Heart right ventricle (tissue), 16 donors: ENCODE measurements at regions of chr6 and their contacts with region 1.

Region 1: GRCh38 chr6:168884646-168885086 is 369.0 kb downstream of the THBS2 start:
- DNase-seq: peak; percentile 54 to 80
- ATAC-seq: peak; percentile 82 to 88 (median 86)
- H3K4me3 ChIP-seq: peak overlapping the region in 8 of 10 donors; percentile 4 to 49 (median 42)
- H3K27ac ChIP-seq: peak overlapping the region in 1 of 10 donors; percentile 41
- H3K4me1 ChIP-seq: peaks cover 0 to 5% (median 0%) of the 10 kb centered on the region in 9 donors
- H3K27me3 ChIP-seq: peaks cover 0 to 26% (median 8%) of the 10 kb centered on the region in 7 donors
- CTCF ChIP-seq: peak; percentile 89 to 97 (median 95)

Region 2: GRCh38 chr6:168150551-168151320 is 733.9 kb before region 1 on chr6:
- intact Hi-C with region 1: loop called in 5 of 10 experiments (anchors 10 kb)
- DNase-seq: no peak
- ATAC-seq: peak in 5 of 8 donors; percentile 22 to 35 (median 33)
- H3K4me3 ChIP-seq: no peak overlapping the region
- H3K27ac ChIP-seq: no peak overlapping the region
- H3K4me1 ChIP-seq: peaks cover 0 to 4% (median 0%) of the 10 kb centered on the region in 9 donors
- H3K27me3 ChIP-seq: peaks cover 0 to 50% (median 32%) of the 10 kb centered on the region in 7 donors
- CTCF ChIP-seq: peak in 8 of 9 donors; percentile 29 to 62 (median 44)

Region 3: GRCh38 chr6:168157272-168158007 is 727.2 kb before region 1 on chr6:
- intact Hi-C with region 1: loop called in 4 of 10 experiments (anchors 10 kb)
- DNase-seq: no peak
- ATAC-seq: peak in 4 of 8 donors; percentile 35 to 56 (median 42)
- H3K4me3 ChIP-seq: no peak overlapping the region
- H3K27ac ChIP-seq: no peak overlapping the region
- H3K4me1 ChIP-seq: no peaks in the 10 kb centered on the region
- H3K27me3 ChIP-seq: peaks cover 0 to 54% (median 29%) of the 10 kb centered on the region in 7 donors
- CTCF ChIP-seq: no peak

Region 4: DNA sequence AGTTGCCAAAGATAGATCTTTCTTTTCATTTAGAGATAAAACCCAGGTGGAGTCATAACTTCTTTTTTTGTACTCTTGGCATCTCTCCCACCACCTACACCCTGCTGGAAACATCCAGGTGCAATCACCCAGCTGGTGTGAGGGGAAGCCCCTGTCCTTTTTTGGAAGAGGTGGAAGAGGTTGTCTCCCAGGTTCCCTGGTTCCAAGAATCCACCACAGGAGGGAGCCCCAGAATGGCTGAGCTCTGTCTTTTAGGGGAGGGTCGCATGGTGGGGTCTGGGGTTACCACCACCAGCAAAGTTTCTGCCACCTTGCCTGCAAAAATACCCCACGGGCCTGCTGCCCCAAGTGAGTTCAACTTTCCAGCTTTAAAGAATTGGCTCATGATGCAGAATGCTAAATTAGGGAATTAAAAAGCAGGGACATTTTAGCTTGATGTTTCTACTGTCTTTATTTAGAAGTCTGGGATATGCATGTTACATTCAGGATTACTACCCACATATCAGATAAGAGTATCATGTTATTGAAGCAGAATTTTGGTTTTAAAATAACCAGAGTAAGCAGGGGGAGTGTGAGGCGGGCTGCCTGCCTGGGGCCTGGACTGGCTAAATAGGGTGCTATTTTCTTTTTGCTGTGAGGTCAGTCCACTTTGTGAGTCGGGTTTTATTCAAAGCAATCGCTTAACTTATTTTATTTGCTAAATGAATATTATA is 432.7 kb before region 1 on chr6:
- intact Hi-C with region 1: loop called in 1 of 10 experiments (anchors 10 kb)
- DNase-seq: no peak
- ATAC-seq: peak in 4 of 8 donors; percentile 27 to 49 (median 40)
- H3K4me3 ChIP-seq: no peak overlapping the region
- H3K27ac ChIP-seq: peak overlapping the region in 4 of 10 donors; percentile 8 to 39 (median 22)
- H3K4me1 ChIP-seq: peaks cover 0 to 48% (median 10%) of the 10 kb centered on the region in 9 donors
- H3K27me3 ChIP-seq: peaks cover 0 to 47% (median 10%) of the 10 kb centered on the region in 7 donors
- CTCF ChIP-seq: peak in 8 of 9 donors; percentile 23 to 50 (median 32)

Region 5: DNA sequence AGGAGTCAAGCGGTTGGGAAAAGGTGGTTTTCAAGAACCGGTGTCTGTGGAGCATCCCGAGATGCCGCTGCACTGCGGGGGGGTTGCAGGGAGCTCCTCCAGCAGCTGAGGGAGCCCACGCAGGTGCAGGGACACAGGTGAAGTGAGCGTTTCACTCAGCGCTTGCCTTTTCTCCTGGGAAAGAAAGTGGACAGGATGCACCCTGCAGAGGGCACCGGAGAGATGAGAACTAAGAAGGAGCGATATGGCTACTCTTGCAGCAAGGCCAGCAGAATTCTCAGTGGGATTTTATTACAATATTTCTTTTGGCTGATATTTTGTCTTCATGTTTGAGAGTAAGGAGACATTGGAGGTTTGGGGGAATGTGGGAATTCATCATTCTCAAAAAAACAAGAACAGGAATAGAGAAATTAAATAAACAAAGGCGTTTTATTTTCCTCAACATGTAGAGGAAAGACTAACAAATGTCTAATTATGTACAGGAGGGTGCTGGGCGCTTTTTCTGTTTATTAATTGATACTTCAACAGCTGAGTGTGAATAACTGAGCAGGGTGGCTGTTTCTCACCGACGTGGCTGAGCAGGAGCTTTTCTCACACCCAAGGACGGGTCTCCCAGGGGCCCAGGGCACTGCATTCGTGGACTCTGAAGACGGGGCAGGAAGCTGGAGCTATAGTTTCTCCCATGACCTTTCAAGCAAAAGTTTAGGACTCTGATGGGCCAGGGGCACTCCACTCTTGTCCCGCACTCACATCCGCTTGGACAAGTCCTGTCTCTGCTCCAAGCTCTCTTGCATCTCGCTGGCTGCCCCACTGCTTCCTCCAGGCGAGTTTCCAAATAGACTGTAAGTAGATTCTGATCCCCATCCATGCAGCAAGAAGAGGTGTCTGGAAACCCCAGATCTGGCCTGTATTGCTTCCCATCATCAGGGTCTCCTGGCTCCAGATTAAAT is 267.6 kb before region 1 on chr6:
- intact Hi-C with region 1: loop called in 8 of 10 experiments (anchors 1 to 10 kb)
- DNase-seq: peak in 1 of 2 donors; percentile 39
- ATAC-seq: peak; percentile 53 to 91 (median 74)
- H3K4me3 ChIP-seq: no peak overlapping the region
- H3K27ac ChIP-seq: peak overlapping the region in 6 of 10 donors; percentile 15 to 50 (median 40)
- H3K4me1 ChIP-seq: peaks cover 0 to 17% (median 0%) of the 10 kb centered on the region in 9 donors
- H3K27me3 ChIP-seq: no peaks in the 10 kb centered on the region
- CTCF ChIP-seq: peak in 8 of 9 donors; percentile 11 to 57 (median 38)

Region 6: DNA sequence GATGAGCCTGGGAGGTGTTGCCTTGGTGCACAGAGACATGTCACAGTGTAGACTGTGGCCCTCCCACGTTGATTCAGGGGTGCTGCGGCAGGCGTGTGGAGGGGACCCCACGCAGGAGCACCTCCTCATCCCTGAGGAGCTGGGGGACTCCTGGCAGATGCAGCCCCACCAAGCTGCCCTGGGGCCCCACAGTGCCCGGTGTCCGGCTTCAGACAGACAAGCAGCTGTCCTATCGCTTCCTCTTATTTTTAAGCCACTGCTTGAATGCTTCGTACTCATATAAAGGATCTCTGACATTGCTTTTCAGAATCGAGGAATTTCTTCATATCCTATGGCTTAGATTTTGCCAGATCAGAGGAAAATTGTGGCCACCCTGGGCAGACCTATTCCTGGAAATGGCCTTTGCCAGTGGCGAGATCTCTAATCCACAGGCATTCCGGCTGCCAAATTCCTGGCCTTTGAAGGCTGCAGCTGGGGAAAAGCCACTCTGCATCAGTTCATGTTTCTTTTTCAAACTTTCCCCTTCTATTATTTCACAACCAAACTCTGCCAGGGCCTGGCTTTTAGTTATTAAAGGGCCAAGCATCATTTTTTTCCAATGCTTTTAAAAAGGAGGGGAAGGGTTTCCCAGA is 32.0 kb after region 1 on chr6:
- intact Hi-C with region 1: no loop called
- DNase-seq: no peak
- ATAC-seq: peak in 2 of 8 donors; percentile 22 to 57
- H3K4me3 ChIP-seq: no peak overlapping the region
- H3K27ac ChIP-seq: no peak overlapping the region
- H3K4me1 ChIP-seq: peaks cover 0 to 8% (median 0%) of the 10 kb centered on the region in 9 donors
- H3K27me3 ChIP-seq: peaks cover 0 to 10% (median 0%) of the 10 kb centered on the region in 7 donors
- CTCF ChIP-seq: no peak